CD4-positive, alpha-beta memory T cell (primary cell): ENCODE measurements at regions of chr7 and their contacts with region 1.

Region 1: DNA sequence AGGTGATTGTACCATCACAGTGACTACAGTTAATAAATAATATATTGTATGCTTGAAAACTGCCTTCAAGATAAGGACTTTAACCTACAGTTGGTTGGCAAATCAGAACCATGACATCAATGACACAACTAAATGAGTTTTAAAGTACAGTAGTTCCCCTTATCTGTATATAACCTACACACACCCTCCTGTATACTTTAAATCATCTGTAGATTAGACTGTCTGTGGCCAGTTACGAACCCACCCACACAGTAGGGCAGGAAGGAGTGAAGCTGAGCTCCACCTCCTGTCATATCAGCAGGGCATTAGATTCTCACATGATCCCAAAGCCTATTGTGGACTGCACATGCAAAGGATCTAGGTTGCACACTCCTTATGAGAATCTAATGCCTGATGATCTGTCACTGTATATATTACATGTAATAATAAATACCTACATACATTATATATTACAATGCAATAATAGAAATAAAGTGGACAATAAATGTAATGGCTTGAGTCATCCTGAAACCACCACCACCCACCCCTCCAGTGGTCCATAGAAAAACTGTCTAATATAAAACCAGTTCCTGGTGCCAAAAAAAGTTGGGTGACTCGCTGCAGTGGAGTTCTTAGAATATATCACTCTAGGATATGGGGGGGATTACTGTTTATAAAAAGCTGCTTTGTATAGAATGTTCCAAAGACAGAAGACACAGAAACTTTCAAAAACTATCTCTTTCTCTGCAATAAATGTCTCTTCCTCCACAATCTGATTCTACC is 5.6 kb downstream of the TPK1 start:
- DNase-seq: no peak
- H3K4me3 ChIP-seq: no peak overlapping the region
- H3K4me3 Mint-ChIP-seq: peak overlapping the region in 5 of 8 donors; percentile 13 to 74 (median 65)
- H3K27ac ChIP-seq: peak overlapping the region; percentile 10
- H3K27ac Mint-ChIP-seq: peak overlapping the region; percentile 80 to 95 (median 84)
- H3K4me1 ChIP-seq: peaks cover 63% of the 10 kb centered on the region
- H3K4me1 Mint-ChIP-seq: peaks cover 35 to 73% (median 48%) of the 10 kb centered on the region in 4 donors
- H3K27me3 ChIP-seq: no peaks in the 10 kb centered on the region
- H3K27me3 Mint-ChIP-seq: no peaks in the 10 kb centered on the region

Region 2: GRCh38 chr7:144818511-144818910 is 11.7 kb before region 1 on chr7:
- CTCF ChIA-PET with region 1: interaction called, 83 read pairs
- POLR2A ChIA-PET with region 1: interaction called, 409 read pairs
- intact Hi-C with region 1: loop called (anchors 1 kb)
- DNase-seq: peak; percentile 72 to 88 (median 77)
- H3K4me3 ChIP-seq: peak overlapping the region in 1 of 2 donors; percentile 3
- H3K4me3 Mint-ChIP-seq: peak overlapping the region; percentile 46 to 84 (median 72)
- H3K27ac ChIP-seq: peak overlapping the region; percentile 54
- H3K27ac Mint-ChIP-seq: peak overlapping the region; percentile 80 to 99 (median 93)
- H3K4me1 ChIP-seq: peaks cover 67% of the 10 kb centered on the region
- H3K4me1 Mint-ChIP-seq: peaks cover 64 to 90% (median 72%) of the 10 kb centered on the region in 4 donors
- H3K27me3 ChIP-seq: no peaks in the 10 kb centered on the region
- H3K27me3 Mint-ChIP-seq: no peaks in the 10 kb centered on the region